IMR-90 (cell line): ENCODE measurements at regions of chr3 and their contacts with region 1.

Region 1: GRCh38 chr3:115783938-115784738 is 160.8 kb downstream of the GAP43 start:
- DNase-seq: peak; percentile 93
- ATAC-seq: peak; percentile 89
- H3K4me3 ChIP-seq: peak overlapping the region; percentile 64
- H3K27ac ChIP-seq: peak overlapping the region; percentile 79
- H3K4me1 ChIP-seq: peaks cover 5% of the 10 kb centered on the region
- H3K27me3 ChIP-seq: no peaks in the 10 kb centered on the region
- CTCF ChIP-seq: peak; percentile 98
- POLR2A ChIP-seq: peak; percentile 79
- RAD21 ChIP-seq: peak; percentile 78

Region 2: GRCh38 chr3:115040673-115041286 is 743.4 kb before region 1 on chr3:
- CTCF ChIA-PET with region 1: no interaction called
- POLR2A ChIA-PET with region 1: no interaction called
- dilution Hi-C with region 1: no loop called
- in situ Hi-C with region 1: no loop called
- intact Hi-C with region 1: loop called (anchors 10 kb)
- DNase-seq: peak; percentile 52
- ATAC-seq: peak; percentile 65
- H3K4me3 ChIP-seq: no peak overlapping the region
- H3K27ac ChIP-seq: no peak overlapping the region
- H3K4me1 ChIP-seq: peaks cover 2% of the 10 kb centered on the region; the same call in 1 of the 2 replicates
- H3K27me3 ChIP-seq: no peaks in the 10 kb centered on the region
- CTCF ChIP-seq: peak; percentile 72
- POLR2A ChIP-seq: no peak
- RAD21 ChIP-seq: peak; percentile 62

Region 3: DNA sequence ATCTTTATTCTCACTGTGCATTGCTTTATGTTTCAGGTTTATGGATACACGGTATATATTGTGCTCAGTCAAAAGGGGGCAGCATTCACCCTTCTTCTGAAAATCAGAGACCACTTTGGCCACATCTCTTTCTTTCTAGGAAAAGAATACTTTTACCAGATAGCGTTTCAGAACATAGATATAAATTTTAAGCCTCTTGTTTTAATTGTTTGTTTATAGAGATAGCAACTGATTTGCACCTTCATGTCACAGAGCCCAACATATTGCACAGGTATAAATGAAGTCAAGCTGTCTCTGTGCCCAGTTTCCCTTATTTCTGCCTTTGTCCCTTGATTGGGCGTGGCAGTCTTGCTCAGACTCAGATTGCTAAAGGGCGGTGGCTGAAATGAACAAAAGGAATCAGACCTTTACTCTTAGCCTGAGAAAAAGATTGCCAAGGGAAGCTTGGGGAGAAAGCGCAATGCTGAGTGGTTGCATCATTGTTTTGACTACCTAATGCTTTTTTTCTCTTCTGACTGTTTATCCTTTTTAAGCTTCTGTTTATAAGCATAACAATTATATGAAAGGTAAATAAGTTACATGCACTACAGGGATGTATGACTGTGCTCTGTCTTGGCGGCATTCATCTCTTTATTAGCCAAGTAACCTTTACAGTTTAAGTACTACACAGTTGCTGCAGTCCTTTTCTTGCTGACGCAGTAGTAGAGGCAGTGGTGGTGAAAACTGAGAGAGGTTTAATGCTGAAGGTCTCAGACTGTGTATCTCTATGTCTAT is 566.3 kb before region 1 on chr3:
- CTCF ChIA-PET with region 1: interaction called, 4 read pairs
- POLR2A ChIA-PET with region 1: no interaction called
- dilution Hi-C with region 1: no loop called
- in situ Hi-C with region 1: no loop called
- intact Hi-C with region 1: loop called (anchors 1 kb)
- DNase-seq: peak; percentile 71
- ATAC-seq: peak; percentile 97
- H3K4me3 ChIP-seq: no peak overlapping the region
- H3K27ac ChIP-seq: 0 out of 2 replicates have a peak overlapping the region, but pooled peaks have one; percentile 42
- H3K4me1 ChIP-seq: peaks cover 3% of the 10 kb centered on the region; the same call in 1 of the 2 replicates
- H3K27me3 ChIP-seq: no peaks in the 10 kb centered on the region
- CTCF ChIP-seq: peak; percentile 93
- POLR2A ChIP-seq: no peak
- RAD21 ChIP-seq: peak; percentile 93

Region 4: DNA sequence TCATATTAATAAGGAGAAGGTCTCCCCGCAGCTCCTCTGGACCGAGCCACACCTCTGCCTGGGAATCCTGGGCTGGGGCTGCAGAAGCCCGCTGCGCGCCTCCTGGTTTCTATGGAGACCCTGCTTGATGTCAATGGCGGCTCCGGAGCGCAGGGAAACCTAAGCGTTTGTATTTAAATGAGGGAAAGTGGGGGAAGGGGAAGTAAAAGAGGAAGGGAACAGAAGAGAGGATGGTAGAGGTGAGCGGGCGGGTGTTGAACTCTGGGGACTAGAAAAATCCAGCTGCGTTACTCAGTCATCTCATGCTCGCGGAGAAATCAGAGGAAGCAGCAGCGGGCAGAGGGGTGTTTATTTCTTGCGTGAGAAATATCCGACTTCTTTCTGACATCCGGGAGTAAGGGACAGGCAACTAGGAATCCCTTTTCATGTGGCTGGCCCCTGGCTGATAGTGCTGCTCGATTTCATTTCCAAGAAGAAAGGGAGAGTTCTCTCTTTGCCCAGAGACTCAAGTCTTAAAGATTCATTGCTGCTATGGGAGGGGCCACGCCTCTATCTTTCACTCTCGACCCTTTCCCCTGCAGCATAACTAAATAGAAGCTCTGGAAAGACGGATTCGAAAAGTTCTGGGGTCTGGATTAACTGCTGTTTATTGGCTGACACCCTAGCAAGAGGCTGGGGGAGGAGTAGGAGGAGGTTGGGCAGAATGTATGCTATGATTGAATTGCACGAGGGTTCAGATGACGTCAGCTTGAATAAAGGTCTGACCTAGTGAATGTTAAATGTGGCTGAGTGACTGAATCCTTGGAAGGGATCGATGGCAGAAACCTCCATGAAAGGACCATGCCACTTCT is 271.3 kb before region 1 on chr3:
- CTCF ChIA-PET with region 1: no interaction called
- POLR2A ChIA-PET with region 1: no interaction called
- dilution Hi-C with region 1: no loop called
- in situ Hi-C with region 1: no loop called
- intact Hi-C with region 1: loop called (anchors 10 kb)
- DNase-seq: peak; percentile 38
- ATAC-seq: peak; percentile 76
- H3K4me3 ChIP-seq: peak overlapping the region; percentile 43
- H3K27ac ChIP-seq: no peak overlapping the region
- H3K4me1 ChIP-seq: no peaks in the 10 kb centered on the region; the same call in 1 of the 2 replicates
- H3K27me3 ChIP-seq: peaks cover 4% of the 10 kb centered on the region; the same call in 1 of the 2 replicates
- CTCF ChIP-seq: no peak
- POLR2A ChIP-seq: no peak
- RAD21 ChIP-seq: no peak

Region 5: GRCh38 chr3:115671761-115672455 is 112.2 kb before region 1 on chr3:
- CTCF ChIA-PET with region 1: no interaction called
- POLR2A ChIA-PET with region 1: no interaction called
- dilution Hi-C with region 1: no loop called
- in situ Hi-C with region 1: no loop called
- intact Hi-C with region 1: no loop called
- DNase-seq: no peak
- ATAC-seq: no peak
- H3K4me3 ChIP-seq: peak overlapping the region; percentile 14; the same call in 1 of the 2 replicates
- H3K27ac ChIP-seq: no peak overlapping the region
- H3K4me1 ChIP-seq: no peaks in the 10 kb centered on the region
- H3K27me3 ChIP-seq: peaks cover 10% of the 10 kb centered on the region
- CTCF ChIP-seq: no peak
- POLR2A ChIP-seq: no peak
- RAD21 ChIP-seq: no peak

Region 6: GRCh38 chr3:115704661-115705338 is 79.3 kb before region 1 on chr3:
- CTCF ChIA-PET with region 1: interaction called, 3 read pairs
- POLR2A ChIA-PET with region 1: no interaction called
- dilution Hi-C with region 1: no loop called
- in situ Hi-C with region 1: no loop called
- intact Hi-C with region 1: loop called (anchors 2 kb)
- DNase-seq: peak; percentile 75
- ATAC-seq: peak; percentile 79
- H3K4me3 ChIP-seq: no peak overlapping the region
- H3K27ac ChIP-seq: 0 out of 2 replicates have a peak overlapping the region, but pooled peaks have one; percentile 13
- H3K4me1 ChIP-seq: peaks cover 6% of the 10 kb centered on the region
- H3K27me3 ChIP-seq: no peaks in the 10 kb centered on the region
- CTCF ChIP-seq: no peak
- POLR2A ChIP-seq: no peak
- RAD21 ChIP-seq: no peak